Activated CD4-positive, alpha-beta T cell treated with anti-CD3 and anti-CD28 coated beads for 36 hours (primary cell): ENCODE measurements at regions of chr2 and their contacts with region 1.

Region 1: GRCh38 chr2:85888684-85889626 is at the start of gene ST3GAL5:
- DNase-seq: peak; percentile 92
- ATAC-seq: peak; percentile 78
- H3K4me3 Mint-ChIP-seq: peak within 1 kb of the TSS; percentile 75
- H3K27ac Mint-ChIP-seq: peak within 1 kb of the TSS; percentile 75
- H3K4me1 Mint-ChIP-seq: peaks cover 46% of the 10 kb centered on the region
- H3K27me3 Mint-ChIP-seq: no peaks in the 10 kb centered on the region
- total RNA-seq, gene ST3GAL5: 6.2 to 7.3 TPM

Region 2: GRCh38 chr2:85611705-85612587 is 277.0 kb before region 1 on chr2 and contains the start of gene C2orf68:
- CTCF ChIA-PET with region 1: no interaction called
- POLR2A ChIA-PET with region 1: no interaction called
- intact Hi-C with region 1: loop called in 1 of 2 experiments (anchors 2 kb)
- DNase-seq: peak; percentile 94
- ATAC-seq: peak; percentile 76
- H3K4me3 Mint-ChIP-seq: peak within 1 kb of the TSS; percentile 97
- H3K27ac Mint-ChIP-seq: peak within 1 kb of the TSS; percentile 96
- H3K4me1 Mint-ChIP-seq: peaks cover 14% of the 10 kb centered on the region
- H3K27me3 Mint-ChIP-seq: no peaks in the 10 kb centered on the region
- total RNA-seq, gene C2orf68: 33.7 to 47.2 TPM

Region 3: DNA sequence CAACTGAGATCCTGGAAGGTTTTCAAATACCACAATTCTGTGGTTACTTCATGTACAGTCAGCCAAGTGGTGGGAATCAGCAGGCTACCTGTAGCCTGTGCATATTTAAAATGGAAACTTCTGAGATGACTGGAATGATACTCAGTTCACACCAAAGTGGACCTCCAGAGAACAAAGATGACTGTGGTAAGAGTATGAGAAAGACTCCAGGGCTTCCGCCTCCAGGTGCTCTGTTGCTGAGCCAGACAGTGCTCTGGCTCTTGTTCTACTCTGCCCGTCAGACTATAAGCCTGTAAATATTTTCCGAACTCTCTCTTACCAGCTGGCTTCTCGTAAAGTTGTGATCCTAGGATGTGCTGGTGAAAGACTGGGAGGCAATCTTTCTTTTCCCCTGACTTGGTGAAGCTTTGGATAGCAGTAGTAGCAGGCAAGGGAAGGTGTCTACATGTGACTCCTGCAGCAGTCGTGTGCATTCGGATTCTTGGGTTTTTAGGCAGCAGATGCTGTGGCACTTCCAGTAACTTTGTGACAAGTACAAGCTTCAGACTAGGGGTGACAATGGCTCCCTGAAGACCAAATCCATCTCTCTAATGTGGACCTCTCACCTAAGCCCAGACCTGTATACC is 23.3 kb before region 1 on chr2:
- CTCF ChIA-PET with region 1: interaction called, 16 read pairs
- POLR2A ChIA-PET with region 1: no interaction called
- intact Hi-C with region 1: loop called (anchors 1 kb)
- DNase-seq: peak; percentile 61
- ATAC-seq: peak; percentile 89
- H3K4me3 Mint-ChIP-seq: no peak overlapping the region
- H3K27ac Mint-ChIP-seq: no peak overlapping the region
- H3K4me1 Mint-ChIP-seq: peaks cover 54% of the 10 kb centered on the region
- H3K27me3 Mint-ChIP-seq: no peaks in the 10 kb centered on the region

Region 4: DNA sequence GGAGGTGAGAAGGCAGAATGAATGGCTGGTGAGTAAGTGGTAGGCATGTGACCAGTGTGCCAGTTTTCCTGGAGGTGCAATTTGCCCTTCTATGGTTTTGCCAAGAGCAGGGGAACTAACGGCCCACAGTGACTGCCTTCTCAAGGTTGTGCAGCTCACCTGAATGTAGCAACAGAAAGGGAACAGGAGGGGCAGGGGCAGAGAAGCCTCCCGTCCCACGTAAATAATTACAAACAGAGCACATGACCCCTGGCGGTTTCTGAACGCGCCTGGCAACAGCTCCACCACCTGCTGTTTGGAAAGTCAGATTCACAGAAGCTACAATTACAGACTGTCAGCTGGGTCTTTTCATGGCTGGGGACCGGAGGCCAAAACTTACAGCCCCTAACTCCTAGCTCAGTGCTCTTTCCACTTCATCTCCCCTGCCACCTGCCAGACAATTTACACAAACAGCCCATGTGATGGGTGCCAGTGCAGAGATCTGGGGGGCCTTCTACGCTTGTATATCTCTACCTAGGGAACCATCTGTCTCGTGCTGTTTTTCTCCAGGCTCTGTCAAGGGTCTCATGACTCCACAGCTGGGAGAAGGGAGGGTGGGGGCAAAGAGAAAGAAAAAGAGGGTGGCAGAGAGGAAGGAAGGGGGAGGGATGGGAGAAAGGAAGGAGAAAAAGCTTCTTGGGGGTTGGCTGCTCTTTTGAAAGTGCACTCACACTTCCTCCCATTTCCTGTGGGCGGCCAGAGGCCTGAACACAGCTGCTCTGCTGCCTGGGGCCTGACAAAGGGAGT is 147.1 kb after region 1 on chr2:
- CTCF ChIA-PET with region 1: interaction called, 11 read pairs
- POLR2A ChIA-PET with region 1: interaction called, 8 read pairs
- intact Hi-C with region 1: loop called (anchors 1 to 2 kb)
- DNase-seq: peak; percentile 77
- ATAC-seq: peak; percentile 37
- H3K4me3 Mint-ChIP-seq: peak overlapping the region; percentile 10
- H3K27ac Mint-ChIP-seq: peak overlapping the region; percentile 97
- H3K4me1 Mint-ChIP-seq: peaks cover 70% of the 10 kb centered on the region
- H3K27me3 Mint-ChIP-seq: no peaks in the 10 kb centered on the region

Region 5: GRCh38 chr2:86105252-86105968 is 216.5 kb after region 1 on chr2 and contains the start of gene POLR1A:
- CTCF ChIA-PET with region 1: no interaction called
- POLR2A ChIA-PET with region 1: interaction called, 3 read pairs
- intact Hi-C with region 1: loop called in 1 of 2 experiments (anchors 1 kb)
- DNase-seq: peak; percentile 90
- ATAC-seq: peak; percentile 75
- H3K4me3 Mint-ChIP-seq: peak within 1 kb of the TSS; percentile 88
- H3K27ac Mint-ChIP-seq: peak within 1 kb of the TSS; percentile 99
- H3K4me1 Mint-ChIP-seq: peaks cover 54% of the 10 kb centered on the region
- H3K27me3 Mint-ChIP-seq: no peaks in the 10 kb centered on the region
- total RNA-seq, gene POLR1A: 38.1 to 45.5 TPM

Region 6: DNA sequence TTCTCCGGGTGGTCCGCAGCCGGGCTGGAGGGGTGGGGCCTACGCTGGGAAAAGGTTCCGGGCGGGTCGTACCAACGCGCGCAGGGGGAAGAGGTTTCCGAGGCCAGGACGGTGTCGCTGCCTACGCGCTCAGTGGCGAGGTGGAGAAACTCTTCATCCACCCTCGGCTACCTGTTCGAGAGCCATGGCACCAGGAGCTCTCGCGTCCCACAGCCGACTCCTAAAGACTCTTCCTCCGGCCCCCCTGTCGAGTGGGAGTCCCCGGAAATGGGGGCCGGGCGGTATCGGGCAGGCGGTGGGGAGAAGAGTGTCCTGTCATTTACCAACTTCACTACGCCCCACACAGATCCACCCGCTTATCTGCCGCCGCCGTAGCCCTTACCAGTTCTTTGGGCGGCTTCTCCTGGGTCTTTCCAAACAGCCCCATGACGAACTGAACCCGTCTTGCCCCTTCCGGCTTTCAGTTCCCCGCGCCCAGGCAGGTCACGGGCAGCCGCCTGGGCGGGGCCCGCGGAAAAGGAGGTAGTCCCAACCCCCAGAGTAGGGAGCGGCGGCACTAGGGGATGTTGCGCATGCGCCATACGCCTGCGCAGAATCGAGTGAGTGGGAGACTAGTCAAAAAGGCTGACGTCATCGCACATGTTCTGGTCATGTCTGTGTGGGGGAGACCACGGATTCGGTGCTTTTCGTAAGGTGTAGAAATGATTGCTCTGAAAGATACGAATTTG is 674.1 kb after region 1 on chr2 and contains the start of gene CHMP3:
- CTCF ChIA-PET with region 1: no interaction called
- POLR2A ChIA-PET with region 1: no interaction called
- intact Hi-C with region 1: loop called in 1 of 2 experiments (anchors 1 kb)
- DNase-seq: peak; percentile 97
- ATAC-seq: peak; percentile 92
- H3K4me3 Mint-ChIP-seq: peak within 1 kb of the TSS; percentile 95
- H3K27ac Mint-ChIP-seq: peak within 1 kb of the TSS; percentile 99
- H3K4me1 Mint-ChIP-seq: peaks cover 30% of the 10 kb centered on the region
- H3K27me3 Mint-ChIP-seq: no peaks in the 10 kb centered on the region
- total RNA-seq, gene CHMP3: 35.0 to 35.8 TPM